Sigmoid colon (tissue), 7 donors: ENCODE measurements at regions of chr10 and their contacts with region 1.

Region 1: DNA sequence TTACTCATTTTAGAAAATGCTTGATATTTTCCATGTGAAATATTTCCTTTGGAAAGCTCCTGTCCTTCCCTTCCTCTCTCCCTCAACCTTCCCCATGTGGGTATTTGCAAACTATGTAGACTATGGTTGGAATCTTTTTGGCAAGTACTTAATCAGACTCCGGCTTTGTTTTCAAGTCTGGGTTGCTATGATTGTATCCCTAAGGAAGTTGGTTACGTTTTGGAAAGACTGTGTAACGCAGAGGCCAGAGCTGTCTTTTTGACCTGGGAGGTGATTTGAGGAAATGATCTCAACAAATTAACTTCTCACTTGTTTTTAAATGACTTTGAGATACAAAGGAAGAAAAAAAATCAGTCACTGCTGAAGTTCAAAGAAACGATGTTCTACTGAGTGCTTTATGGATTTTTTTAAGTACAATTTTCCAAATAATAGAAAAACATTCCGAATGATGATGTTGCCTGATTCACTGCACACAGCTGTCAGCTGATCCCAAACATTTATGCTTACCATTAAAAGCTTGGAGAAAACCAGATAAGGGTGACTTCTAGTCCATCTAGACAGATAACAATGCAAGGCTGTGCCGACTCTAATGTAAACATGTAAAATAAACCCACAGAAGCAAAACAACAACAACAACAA is 145.5 kb upstream of the CELF2 start:
- DNase-seq: no peak
- H3K4me3 ChIP-seq: no peak overlapping the region
- H3K27ac ChIP-seq: peak overlapping the region; percentile 53 to 79 (median 70)
- H3K4me1 ChIP-seq: peaks cover 0 to 32% (median 25%) of the 10 kb centered on the region in 4 donors
- H3K27me3 ChIP-seq: no peaks in the 10 kb centered on the region
- CTCF ChIP-seq: no peak
- EP300 ChIP-seq: peak in 3 of 4 donors; percentile 10 to 59 (median 29)
- POLR2A ChIP-seq: no peak

Region 2: GRCh38 chr10:10798102-10798863 is 73.9 kb before region 1 on chr10:
- intact Hi-C with region 1: loop called (anchors 5 kb)
- DNase-seq: peak; percentile 71
- H3K4me3 ChIP-seq: peak overlapping the region; percentile 5 to 43 (median 35)
- H3K27ac ChIP-seq: peak overlapping the region; percentile 83 to 90 (median 85)
- H3K4me1 ChIP-seq: peaks cover 0 to 59% (median 44%) of the 10 kb centered on the region in 4 donors
- H3K27me3 ChIP-seq: no peaks in the 10 kb centered on the region
- CTCF ChIP-seq: no peak
- EP300 ChIP-seq: no peak
- POLR2A ChIP-seq: no peak

Region 3: GRCh38 chr10:10911471-10911921 is 39.3 kb after region 1 on chr10:
- intact Hi-C with region 1: loop called (anchors 5 kb)
- DNase-seq: peak; percentile 93
- H3K4me3 ChIP-seq: peak overlapping the region; percentile 25 to 42 (median 36)
- H3K27ac ChIP-seq: peak overlapping the region; percentile 73 to 86 (median 84)
- H3K4me1 ChIP-seq: peaks cover 0 to 46% (median 32%) of the 10 kb centered on the region in 4 donors
- H3K27me3 ChIP-seq: no peaks in the 10 kb centered on the region
- CTCF ChIP-seq: no peak
- EP300 ChIP-seq: no peak
- POLR2A ChIP-seq: no peak